ENCODE measurements at regions of chr9 and their contacts with region 1.

Region 1: DNA sequence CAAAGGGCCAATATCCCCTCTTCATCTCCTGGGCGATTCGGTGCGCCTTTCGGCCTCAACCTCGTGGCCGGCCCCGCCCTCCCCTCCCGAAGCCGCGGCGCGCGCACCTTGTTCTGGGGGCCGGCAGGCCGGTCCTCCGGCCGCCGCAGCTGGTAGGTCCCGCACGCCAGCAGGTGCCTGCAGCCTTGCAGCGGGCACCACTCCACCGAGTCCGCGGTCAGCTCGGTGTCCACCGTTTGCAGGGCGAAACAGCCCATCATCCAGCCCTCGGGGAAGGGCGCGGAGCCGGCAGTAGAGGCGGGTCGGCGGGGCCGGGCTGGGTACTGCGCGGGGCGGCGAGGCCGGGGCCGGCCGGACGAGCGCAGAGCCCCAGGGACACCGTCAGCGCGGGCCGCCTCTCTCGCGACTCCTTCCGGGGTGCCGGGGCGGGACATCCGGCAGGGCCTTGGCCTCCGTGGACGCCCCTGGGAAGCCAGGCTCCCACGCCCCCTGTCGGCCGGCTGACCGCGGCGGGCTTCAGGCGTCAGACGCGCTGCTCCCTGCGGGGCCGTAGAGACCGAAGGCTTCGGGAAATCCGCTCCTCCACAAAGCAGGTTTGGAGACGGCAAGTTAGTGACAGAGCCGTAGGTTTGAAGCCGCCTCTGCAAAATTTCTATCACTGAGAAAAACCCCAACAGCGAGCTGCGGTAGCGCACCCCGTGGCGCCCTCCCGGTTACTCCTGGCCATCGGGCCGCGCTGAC is at the start of gene DPH7:
- DNase-seq: peak; percentile 17
- H3K4me3 ChIP-seq: peak within 1 kb of the TSS; percentile 95
- CTCF ChIP-seq: peak; percentile 99

Region 2: GRCh38 chr9:137067860-137068538 is 510.7 kb before region 1 on chr9:
- CTCF ChIA-PET with region 1: no interaction called
- POLR2A ChIA-PET with region 1: no interaction called
- DNase-seq: no peak
- H3K4me3 ChIP-seq: no peak overlapping the region
- CTCF ChIP-seq: peak; percentile 91

Region 3: DNA sequence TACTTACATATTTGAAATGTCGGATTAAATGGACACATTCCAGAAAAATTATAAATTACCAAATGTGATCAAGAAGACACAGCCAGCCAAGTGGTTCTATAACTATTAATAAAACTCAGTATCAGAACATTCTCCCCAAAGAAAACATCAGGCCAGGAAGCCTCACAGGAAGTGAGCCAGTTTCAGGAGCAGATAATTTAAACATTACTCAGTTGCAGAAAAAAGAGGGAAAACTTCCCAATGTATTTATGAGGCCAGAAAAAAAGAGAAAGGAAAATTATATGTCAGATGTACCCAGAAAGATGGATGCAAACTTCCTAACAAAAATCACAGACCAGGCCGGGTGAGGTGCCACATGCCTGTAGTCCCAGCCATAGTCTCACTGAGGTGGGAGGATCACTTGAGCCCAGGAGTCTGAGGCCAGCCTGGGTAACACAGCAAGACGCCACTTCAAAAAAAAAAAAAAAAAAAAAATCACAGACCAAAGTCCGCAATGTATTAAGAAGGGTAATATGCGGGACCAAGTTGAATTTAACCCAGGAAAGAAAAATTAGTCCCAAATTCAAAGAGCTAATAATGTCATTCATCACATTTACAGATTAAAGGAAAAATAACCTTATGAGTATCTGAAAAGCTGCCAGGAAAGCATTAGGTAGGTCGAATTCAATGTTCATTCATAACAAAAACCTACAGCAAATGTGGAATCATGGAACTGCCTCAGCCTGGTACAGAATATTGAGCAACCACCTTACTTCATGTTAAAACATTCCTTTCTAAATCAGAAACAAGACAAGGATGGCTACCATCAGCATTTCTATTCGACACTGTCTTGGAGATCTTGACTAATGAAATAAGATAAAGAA is 239.4 kb before region 1 on chr9:
- CTCF ChIA-PET with region 1: no interaction called
- POLR2A ChIA-PET with region 1: no interaction called
- DNase-seq: no peak
- H3K4me3 ChIP-seq: no peak overlapping the region
- CTCF ChIP-seq: no peak

Region 4: DNA sequence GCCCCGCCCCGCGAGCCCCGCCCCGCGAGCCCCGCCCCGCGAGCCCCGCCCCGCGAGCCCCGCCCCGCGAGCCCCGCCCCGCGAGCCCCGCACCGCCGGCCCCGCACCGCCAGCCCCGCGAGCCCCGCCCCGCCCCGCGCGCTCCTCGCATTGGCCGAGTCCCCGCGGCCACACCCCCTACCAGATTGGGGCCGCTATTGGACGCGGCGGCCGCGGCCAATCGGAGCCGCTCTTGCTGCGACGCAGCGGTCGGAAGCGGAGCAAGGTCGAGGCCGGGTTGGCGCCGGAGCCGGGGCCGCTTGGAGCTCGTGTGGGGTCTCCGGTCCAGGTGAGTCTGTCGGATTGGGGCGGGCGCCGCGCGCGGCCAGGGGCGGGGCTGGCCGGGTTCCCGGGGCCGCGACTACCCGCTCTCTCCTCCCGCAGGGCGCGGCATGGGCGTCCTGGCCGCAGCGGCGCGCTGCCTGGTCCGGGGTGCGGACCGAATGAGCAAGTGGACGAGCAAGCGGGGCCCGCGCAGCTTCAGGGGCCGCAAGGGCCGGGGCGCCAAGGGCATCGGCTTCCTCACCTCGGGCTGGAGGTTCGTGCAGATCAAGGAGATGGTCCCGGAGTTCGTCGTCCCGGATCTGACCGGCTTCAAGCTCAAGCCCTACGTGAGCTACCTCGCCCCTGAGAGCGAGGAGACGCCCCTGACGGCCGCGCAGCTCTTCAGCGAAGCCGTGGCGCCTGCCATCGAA is 26.9 kb before region 1 on chr9 and contains the start of gene MRPL41:
- CTCF ChIA-PET with region 1: interaction called, 10 read pairs
- POLR2A ChIA-PET with region 1: interaction called, 7 read pairs
- DNase-seq: no peak
- H3K4me3 ChIP-seq: peak within 1 kb of the TSS; percentile 75
- CTCF ChIP-seq: no peak

Region 5: DNA sequence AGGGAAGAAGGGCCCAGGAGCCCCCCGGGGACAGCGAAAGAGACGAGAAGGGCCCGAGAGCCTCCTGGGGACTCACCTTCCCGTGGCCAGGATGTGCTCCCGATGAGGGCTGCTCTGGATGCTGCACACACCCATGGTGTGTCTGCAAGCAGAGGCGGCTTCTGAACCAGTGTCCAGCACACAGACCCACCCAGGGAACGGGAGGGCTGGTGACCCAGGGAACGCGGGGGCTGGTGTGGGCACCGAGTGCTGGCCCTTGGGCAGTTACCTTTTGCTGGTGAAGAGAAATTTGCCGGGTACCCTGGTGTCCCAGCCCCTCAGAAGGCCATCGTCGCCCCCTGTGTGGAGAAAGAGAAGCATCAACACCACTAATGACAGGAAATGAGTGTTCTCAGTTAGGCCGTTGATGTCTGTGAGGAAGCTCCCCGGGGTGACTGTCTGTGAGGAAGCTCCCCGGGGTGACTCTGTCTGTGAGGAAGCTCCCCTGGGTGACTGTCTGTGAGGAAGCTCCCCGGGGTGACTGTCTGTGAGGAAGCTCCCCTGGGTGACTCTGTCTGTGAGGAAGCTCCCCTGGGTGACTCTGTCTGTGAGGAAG is 13.8 kb before region 1 on chr9:
- CTCF ChIA-PET with region 1: interaction called, 11 read pairs
- POLR2A ChIA-PET with region 1: no interaction called
- DNase-seq: no peak
- H3K4me3 ChIP-seq: no peak overlapping the region
- CTCF ChIP-seq: no peak

Region 6: DNA sequence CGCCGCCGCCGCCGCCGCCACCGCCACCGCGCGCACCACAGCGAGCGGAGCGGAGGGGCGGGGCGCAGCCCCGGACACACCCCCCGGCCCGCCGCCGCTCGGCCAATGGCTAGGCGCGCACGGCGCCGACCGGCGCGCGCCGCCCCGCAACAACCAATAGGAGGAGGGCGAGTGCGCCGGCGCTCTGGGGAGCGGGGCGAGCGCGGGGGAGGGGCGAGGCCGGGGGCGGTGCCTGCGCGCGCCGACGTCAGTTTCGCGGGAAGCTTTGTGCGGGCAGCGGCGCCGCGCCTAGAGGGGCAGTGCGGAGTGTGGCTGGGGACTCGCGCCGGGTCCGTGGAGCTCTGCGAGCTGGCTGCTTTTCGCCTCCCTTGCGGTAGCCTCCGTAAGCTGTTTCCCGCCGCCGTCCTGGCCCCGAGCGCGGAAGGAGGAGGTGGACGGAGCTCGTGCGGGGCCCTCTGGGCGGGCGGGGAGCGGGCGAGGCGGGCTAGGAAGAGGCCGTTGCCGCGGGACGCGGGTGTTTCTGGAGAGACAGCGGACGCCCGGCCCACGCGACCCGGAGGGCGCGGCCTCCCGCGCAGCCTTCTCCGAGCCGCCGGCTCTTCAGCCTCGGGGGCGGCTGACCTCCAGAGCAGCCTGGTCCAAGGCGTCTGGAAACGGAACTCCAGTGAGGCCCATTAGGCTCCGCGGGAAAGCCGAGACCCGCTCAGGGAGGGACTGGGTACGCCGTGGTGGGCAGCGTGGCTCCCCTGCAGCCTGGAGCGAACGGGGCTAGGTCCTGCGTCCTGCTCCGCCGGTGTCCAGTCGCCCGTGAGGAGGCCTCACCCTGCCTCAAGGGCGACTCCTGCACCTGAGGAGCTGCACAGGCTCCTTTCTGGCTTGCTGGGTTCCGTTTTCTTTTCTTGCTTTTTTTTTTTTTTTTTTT is 12.0 kb after region 1 on chr9 and contains the start of gene ZMYND19:
- CTCF ChIA-PET with region 1: interaction called, 91 read pairs
- POLR2A ChIA-PET with region 1: interaction called, 4 read pairs
- DNase-seq: no peak
- H3K4me3 ChIP-seq: peak within 1 kb of the TSS; percentile 82
- CTCF ChIP-seq: no peak